Mammary epithelial cell (primary cell): ENCODE measurements at regions of chr1 and their contacts with region 1.

Region 1: GRCh38 chr1:205190845-205191577 is 20.5 kb downstream of the DSTYK start:
- DNase-seq: no peak
- H3K4me3 ChIP-seq: no peak overlapping the region
- H3K27ac ChIP-seq: no peak overlapping the region
- H3K4me1 ChIP-seq: peaks cover 3% of the 10 kb centered on the region
- H3K27me3 ChIP-seq: no peaks in the 10 kb centered on the region
- CTCF ChIP-seq: no peak

Region 2: GRCh38 chr1:205082431-205082830 is 108.6 kb before region 1 on chr1:
- CTCF ChIA-PET with region 1: no interaction called
- dilution Hi-C with region 1: loop called (anchors 5 kb)
- in situ Hi-C with region 1: no loop called
- intact Hi-C with region 1: no loop called
- DNase-seq: no peak
- H3K4me3 ChIP-seq: no peak overlapping the region
- H3K27ac ChIP-seq: no peak overlapping the region
- H3K4me1 ChIP-seq: no peaks in the 10 kb centered on the region
- H3K27me3 ChIP-seq: no peaks in the 10 kb centered on the region
- CTCF ChIP-seq: no peak

Region 3: GRCh38 chr1:205108464-205108863 is 82.5 kb before region 1 on chr1:
- CTCF ChIA-PET with region 1: interaction called, 11 read pairs
- dilution Hi-C with region 1: no loop called
- in situ Hi-C with region 1: no loop called
- intact Hi-C with region 1: no loop called
- DNase-seq: no peak
- H3K4me3 ChIP-seq: no peak overlapping the region
- H3K27ac ChIP-seq: no peak overlapping the region
- H3K4me1 ChIP-seq: no peaks in the 10 kb centered on the region
- H3K27me3 ChIP-seq: no peaks in the 10 kb centered on the region
- CTCF ChIP-seq: no peak